Activated T-helper 1 cell treated with anti-CD3 and anti-CD28 coated beads, Interleukin-12 subunit alpha, Interleukin-12 subunit beta, Interleukin-2, Interleukin-4 antibody, amounts not matched to agents 30 ng/mL and 10 ng/mL and 1 ng/mL, durations not matched to agents 14 hours and 24 hours and 36 hours (primary cell): ENCODE measurements at regions of chr13 and their contacts with region 1.

Region 1: GRCh38 chr13:36420437-36420891 is 11.8 kb upstream of the CCNA1 start:
- DNase-seq: peak; percentile 61
- H3K4me3 Mint-ChIP-seq: peak overlapping the region; percentile 15
- H3K27ac Mint-ChIP-seq: peak overlapping the region; percentile 46
- H3K4me1 Mint-ChIP-seq: peaks cover 40% of the 10 kb centered on the region
- H3K27me3 Mint-ChIP-seq: peaks cover 13% of the 10 kb centered on the region

Region 2: GRCh38 chr13:36297366-36298338 is 122.8 kb before region 1 on chr13 and contains the start of gene CCDC169:
- intact Hi-C with region 1: loop called (anchors 5 kb)
- DNase-seq: peak; percentile 61
- H3K4me3 Mint-ChIP-seq: peak within 1 kb of the TSS; percentile 87
- H3K27ac Mint-ChIP-seq: peak within 1 kb of the TSS; percentile 20
- H3K4me1 Mint-ChIP-seq: peaks cover 21% of the 10 kb centered on the region
- H3K27me3 Mint-ChIP-seq: peaks cover 25% of the 10 kb centered on the region
- total RNA-seq, gene CCDC169: 0.07 TPM in 1 of 2 replicates, not detected in the other

Region 3: DNA sequence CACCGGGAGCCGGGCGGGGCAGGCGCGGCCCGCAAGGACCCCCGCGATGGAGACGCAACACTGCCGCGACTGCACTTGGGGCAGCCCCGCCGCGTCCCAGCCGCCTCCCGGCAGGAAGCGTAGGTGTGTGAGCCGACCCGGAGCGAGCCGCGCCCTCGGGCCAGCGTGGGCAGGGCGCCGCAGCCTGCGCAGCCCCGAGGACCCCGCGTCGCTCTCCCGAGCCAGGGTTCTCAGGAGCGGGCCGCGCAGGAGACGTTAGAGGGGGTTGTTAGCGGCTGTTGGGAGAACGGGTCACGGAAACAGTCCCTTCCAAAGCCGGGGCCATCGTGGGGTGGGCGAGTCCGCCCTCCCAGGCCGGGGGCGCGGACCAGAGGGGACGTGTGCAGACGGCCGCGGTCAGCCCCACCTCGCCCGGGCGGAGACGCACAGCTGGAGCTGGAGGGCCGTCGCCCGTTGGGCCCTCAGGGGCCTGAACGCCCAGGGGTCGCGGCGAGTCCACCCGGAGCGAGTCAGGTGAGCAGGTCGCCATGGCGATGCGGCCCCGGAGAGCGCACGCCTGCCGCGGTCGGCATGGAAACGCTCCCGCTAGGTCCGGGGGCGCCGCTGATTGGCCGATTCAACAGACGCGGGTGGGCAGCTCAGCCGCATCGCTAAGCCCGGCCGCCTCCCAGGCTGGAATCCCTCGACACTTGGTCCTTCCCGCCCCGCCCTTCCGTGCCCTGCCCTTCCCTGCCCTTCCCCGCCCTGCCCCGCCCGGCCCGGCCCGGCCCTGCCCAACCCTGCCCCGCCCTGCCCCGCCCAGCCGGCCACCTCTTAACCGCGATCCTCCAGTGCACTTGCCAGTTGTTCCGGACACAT is 11.4 kb after region 1 on chr13 and contains the start of gene CCNA1:
- intact Hi-C with region 1: loop called (anchors 1 kb)
- DNase-seq: peak; percentile 16
- H3K4me3 Mint-ChIP-seq: peak within 1 kb of the TSS; percentile 80
- H3K27ac Mint-ChIP-seq: peak within 1 kb of the TSS; percentile 43
- H3K4me1 Mint-ChIP-seq: peaks cover 22% of the 10 kb centered on the region
- H3K27me3 Mint-ChIP-seq: peaks cover 59% of the 10 kb centered on the region
- total RNA-seq, gene CCNA1: 1.5 and 1.6 TPM in 2 replicates

Region 4: GRCh38 chr13:36475468-36475867 is 55.0 kb after region 1 on chr13:
- intact Hi-C with region 1: loop called (anchors 1 kb)
- DNase-seq: no peak
- H3K4me3 Mint-ChIP-seq: no peak overlapping the region
- H3K27ac Mint-ChIP-seq: no peak overlapping the region
- H3K4me1 Mint-ChIP-seq: no peaks in the 10 kb centered on the region
- H3K27me3 Mint-ChIP-seq: peaks cover 13% of the 10 kb centered on the region

Region 5: DNA sequence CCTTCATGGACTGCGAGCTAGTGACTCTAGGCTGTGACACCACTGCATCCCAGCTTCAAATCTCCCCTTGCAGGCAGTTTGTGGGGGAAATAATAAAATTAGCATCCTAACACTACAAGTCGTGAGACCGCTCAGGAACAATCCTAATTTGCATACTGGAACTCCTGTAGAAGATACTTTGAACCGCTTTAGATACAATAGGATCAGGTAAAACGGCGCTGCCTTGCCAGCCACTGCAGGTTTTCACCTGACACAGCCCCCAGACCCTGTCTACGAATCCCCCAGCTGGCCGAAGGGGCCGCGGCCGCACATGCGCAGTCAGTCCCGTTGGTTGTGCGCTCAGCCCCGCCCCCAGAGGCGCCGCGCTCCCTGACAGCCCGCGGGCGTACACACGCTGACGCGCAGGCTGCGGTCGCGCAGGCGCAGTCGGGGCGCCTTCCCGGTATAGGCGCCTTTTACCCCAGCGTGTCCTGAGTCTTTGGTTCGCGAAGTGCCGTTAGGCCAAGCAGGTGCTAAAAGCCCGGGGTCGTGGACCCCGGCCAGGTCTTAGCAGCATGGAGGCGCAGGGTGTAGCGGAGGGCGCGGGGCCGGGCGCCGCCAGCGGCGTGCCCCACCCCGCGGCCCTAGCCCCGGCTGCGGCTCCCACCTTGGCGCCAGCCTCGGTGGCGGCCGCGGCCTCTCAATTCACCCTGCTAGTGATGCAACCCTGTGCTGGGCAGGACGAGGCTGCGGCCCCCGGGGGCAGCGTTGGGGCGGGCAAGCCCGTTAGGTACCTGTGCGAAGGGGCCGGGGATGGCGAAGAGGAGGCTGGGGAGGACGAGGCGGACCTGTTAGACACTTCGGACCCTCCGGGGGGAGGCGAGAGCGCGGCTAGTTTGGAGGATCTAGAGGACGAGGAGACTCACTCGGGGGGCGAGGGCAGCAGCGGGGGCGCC is 398.6 kb after region 1 on chr13 and contains the start of gene RFXAP:
- intact Hi-C with region 1: loop called (anchors 2 kb)
- DNase-seq: peak; percentile 89
- H3K4me3 Mint-ChIP-seq: peak within 1 kb of the TSS; percentile 96
- H3K27ac Mint-ChIP-seq: peak within 1 kb of the TSS; percentile 92
- H3K4me1 Mint-ChIP-seq: peaks cover 60% of the 10 kb centered on the region
- H3K27me3 Mint-ChIP-seq: peaks cover 8% of the 10 kb centered on the region
- total RNA-seq, gene RFXAP: 19.0 and 19.8 TPM in 2 replicates

Region 6: GRCh38 chr13:36999054-36999714 is 578.7 kb after region 1 on chr13 and contains the start of gene ALG5:
- intact Hi-C with region 1: loop called (anchors 2 kb)
- DNase-seq: peak; percentile 95
- H3K4me3 Mint-ChIP-seq: peak within 1 kb of the TSS; percentile 100
- H3K27ac Mint-ChIP-seq: peak within 1 kb of the TSS; percentile 100
- H3K4me1 Mint-ChIP-seq: peaks cover 37% of the 10 kb centered on the region
- H3K27me3 Mint-ChIP-seq: no peaks in the 10 kb centered on the region
- total RNA-seq, gene ALG5: 52.5 and 53.2 TPM in 2 replicates

Region 7: GRCh38 chr13:37457612-37458011 is 1037.1 kb after region 1 on chr13:
- intact Hi-C with region 1: no loop called
- DNase-seq: no peak
- H3K4me3 Mint-ChIP-seq: no peak overlapping the region
- H3K27ac Mint-ChIP-seq: no peak overlapping the region
- H3K4me1 Mint-ChIP-seq: no peaks in the 10 kb centered on the region
- H3K27me3 Mint-ChIP-seq: no peaks in the 10 kb centered on the region

Region 8: DNA sequence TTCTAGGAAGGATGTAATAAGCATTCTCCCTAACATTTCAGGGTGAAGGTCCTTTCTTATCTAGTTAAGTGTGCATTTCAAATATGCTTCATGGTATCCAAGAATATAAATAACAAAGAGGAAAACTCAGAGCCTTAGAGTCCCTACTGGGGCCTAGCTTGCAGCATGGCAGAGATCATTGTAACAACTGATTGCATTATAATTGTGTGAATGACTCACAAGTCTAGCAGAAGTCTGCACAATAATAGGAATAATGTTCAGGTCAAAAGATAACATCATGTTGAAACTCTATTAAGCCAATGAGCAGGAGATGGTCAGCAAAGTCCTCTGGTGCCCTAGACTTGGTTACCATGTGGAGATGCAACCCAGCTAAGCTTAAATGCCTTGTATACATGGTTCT is 1174.7 kb after region 1 on chr13:
- intact Hi-C with region 1: no loop called
- DNase-seq: no peak
- H3K4me3 Mint-ChIP-seq: no peak overlapping the region
- H3K27ac Mint-ChIP-seq: no peak overlapping the region
- H3K4me1 Mint-ChIP-seq: no peaks in the 10 kb centered on the region
- H3K27me3 Mint-ChIP-seq: no peaks in the 10 kb centered on the region